Activated CD4-positive, alpha-beta T cell treated with anti-CD3 and anti-CD28 coated beads for 36 hours (primary cell): ENCODE measurements at regions of chr1 and their contacts with region 1.

Region 1: DNA sequence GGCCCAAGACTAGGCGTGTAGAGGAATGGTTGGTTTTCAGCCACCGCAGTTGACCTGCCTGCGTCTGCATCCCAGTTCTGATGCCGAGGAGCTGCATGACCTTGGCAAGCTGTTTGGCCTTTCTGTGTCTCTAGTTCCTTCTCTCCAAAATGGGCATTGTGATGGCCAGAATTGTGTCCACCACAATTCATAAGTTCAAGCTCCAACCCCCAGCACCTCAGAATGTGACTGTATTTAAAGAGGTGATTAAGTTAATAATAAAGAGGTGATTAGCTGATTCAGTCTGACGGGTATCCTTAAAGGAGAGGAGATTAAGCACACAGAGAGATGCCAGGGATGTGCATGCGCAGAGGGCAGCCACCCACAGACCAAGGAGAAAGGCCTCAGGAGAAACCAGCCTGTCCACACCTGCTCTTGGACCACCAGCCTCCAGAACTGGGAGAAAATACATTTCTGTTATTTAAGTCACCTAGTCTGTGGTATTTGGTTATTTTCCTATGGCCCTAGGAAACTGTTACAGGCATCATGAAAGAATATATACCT is 28.5 kb downstream of the MAB21L3 start:
- DNase-seq: no peak
- ATAC-seq: no peak
- H3K4me3 Mint-ChIP-seq: no peak overlapping the region
- H3K27ac Mint-ChIP-seq: no peak overlapping the region
- H3K4me1 Mint-ChIP-seq: peaks cover 12% of the 10 kb centered on the region
- H3K27me3 Mint-ChIP-seq: no peaks in the 10 kb centered on the region

Region 2: GRCh38 chr1:115991909-115992308 is 147.8 kb before region 1 on chr1:
- CTCF ChIA-PET with region 1: no interaction called
- POLR2A ChIA-PET with region 1: no interaction called
- intact Hi-C with region 1: no loop called
- DNase-seq: no peak
- ATAC-seq: no peak
- H3K4me3 Mint-ChIP-seq: no peak overlapping the region
- H3K27ac Mint-ChIP-seq: no peak overlapping the region
- H3K4me1 Mint-ChIP-seq: peaks cover 3% of the 10 kb centered on the region
- H3K27me3 Mint-ChIP-seq: peaks cover 3% of the 10 kb centered on the region

Region 3: DNA sequence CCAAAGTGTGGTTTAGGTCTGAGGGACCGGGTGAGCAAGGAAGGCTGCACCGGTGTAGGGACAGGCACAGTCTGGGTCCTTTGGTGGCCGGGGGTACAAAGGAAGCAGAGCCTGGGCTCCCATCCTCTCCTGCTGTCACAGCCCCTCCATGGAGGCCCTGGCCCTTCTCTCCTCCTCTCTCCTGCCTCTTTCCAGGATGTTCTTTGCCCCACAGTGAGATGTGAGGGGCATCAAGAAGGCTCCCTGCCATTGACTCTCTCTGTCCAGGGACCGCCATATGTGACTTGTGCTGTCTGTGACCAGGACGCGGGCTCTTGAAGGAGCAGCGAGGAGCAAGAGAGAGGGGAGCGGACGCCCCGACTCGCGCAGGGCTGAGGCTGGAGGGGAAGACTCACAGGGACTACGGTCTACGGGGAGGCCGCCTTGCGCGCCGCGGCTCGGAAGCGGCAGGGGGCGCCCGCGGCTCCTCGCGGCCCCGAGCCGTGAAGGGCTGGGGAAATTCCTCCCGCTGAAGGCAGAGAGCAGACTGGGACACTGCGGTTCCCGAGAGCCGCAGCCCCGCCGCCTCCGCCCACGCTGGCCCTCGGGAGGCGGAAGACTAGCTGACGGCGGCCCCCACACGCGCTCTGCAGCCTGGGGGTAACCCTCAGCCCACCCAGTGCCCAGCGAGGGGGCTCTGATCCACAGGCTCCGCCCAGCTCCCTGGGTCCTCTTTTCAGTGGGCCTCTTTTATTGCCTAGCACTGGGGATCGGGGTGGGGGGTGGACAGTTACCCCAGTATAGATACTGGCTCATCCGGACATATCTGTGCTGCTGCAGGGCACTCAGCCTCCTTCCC is 12.3 kb after region 1 on chr1:
- CTCF ChIA-PET with region 1: interaction called, 55 read pairs
- POLR2A ChIA-PET with region 1: interaction called, 3 read pairs
- intact Hi-C with region 1: no loop called
- DNase-seq: peak; percentile 87
- ATAC-seq: peak; percentile 98
- H3K4me3 Mint-ChIP-seq: peak overlapping the region; percentile 49
- H3K27ac Mint-ChIP-seq: peak overlapping the region; percentile 70
- H3K4me1 Mint-ChIP-seq: peaks cover 18% of the 10 kb centered on the region
- H3K27me3 Mint-ChIP-seq: peaks cover 4% of the 10 kb centered on the region

Region 4: GRCh38 chr1:116411784-116412479 is 272.3 kb after region 1 on chr1:
- CTCF ChIA-PET with region 1: interaction called, 11 read pairs
- POLR2A ChIA-PET with region 1: no interaction called
- intact Hi-C with region 1: no loop called
- DNase-seq: no peak
- ATAC-seq: peak; percentile 19
- H3K4me3 Mint-ChIP-seq: no peak overlapping the region
- H3K27ac Mint-ChIP-seq: no peak overlapping the region
- H3K4me1 Mint-ChIP-seq: peaks cover 32% of the 10 kb centered on the region
- H3K27me3 Mint-ChIP-seq: no peaks in the 10 kb centered on the region

Region 5: GRCh38 chr1:116474921-116475849 is 335.5 kb after region 1 on chr1:
- CTCF ChIA-PET with region 1: interaction called, 11 read pairs
- POLR2A ChIA-PET with region 1: no interaction called
- intact Hi-C with region 1: no loop called
- DNase-seq: no peak
- ATAC-seq: no peak
- H3K4me3 Mint-ChIP-seq: no peak overlapping the region
- H3K27ac Mint-ChIP-seq: no peak overlapping the region
- H3K4me1 Mint-ChIP-seq: no peaks in the 10 kb centered on the region
- H3K27me3 Mint-ChIP-seq: peaks cover 2% of the 10 kb centered on the region

Region 6: DNA sequence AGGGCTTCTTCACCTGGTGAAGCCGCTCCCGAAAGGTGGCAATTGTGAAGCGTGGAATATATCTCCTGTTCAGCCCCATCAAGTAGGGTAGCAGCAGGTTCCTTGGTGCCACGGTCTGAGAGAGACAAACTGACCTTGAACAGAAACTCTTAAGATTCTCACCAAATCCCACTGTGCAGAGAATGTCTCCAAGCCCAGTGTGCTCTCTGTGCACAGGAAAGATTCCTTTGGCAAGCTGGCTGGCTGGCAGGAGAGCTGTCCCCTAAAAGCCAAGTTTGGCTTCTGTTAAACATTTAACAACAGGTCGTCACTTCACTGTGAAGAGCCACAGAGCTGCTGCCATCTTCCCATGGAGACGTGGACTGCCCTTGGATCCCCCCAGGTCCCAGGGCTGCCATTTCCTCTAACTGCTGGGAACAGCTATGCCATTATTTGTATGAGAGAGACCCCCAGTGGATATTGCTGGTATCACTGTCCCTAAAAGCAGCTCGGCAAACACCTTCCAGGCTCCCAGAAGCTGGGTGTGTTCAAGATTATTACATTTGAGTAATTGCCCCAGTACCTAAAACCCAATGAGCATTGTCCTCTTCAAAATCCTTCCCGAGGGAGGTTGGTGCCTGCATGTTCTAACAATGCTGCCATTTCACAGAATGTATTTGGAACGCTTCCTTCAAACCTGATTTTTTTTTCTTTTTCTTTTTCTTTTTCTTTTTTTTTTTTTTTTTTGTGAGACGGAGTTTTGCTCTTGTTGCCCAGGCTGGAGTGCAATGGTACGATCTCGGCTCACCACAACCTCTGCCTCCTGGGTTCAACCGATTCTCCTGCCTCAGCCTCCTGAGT is 359.3 kb after region 1 on chr1:
- CTCF ChIA-PET with region 1: interaction called, 73 read pairs
- POLR2A ChIA-PET with region 1: no interaction called
- intact Hi-C with region 1: loop called (anchors 1 kb)
- DNase-seq: peak; percentile 61
- ATAC-seq: peak; percentile 73
- H3K4me3 Mint-ChIP-seq: no peak overlapping the region
- H3K27ac Mint-ChIP-seq: no peak overlapping the region
- H3K4me1 Mint-ChIP-seq: peaks cover 24% of the 10 kb centered on the region
- H3K27me3 Mint-ChIP-seq: no peaks in the 10 kb centered on the region

Region 7: DNA sequence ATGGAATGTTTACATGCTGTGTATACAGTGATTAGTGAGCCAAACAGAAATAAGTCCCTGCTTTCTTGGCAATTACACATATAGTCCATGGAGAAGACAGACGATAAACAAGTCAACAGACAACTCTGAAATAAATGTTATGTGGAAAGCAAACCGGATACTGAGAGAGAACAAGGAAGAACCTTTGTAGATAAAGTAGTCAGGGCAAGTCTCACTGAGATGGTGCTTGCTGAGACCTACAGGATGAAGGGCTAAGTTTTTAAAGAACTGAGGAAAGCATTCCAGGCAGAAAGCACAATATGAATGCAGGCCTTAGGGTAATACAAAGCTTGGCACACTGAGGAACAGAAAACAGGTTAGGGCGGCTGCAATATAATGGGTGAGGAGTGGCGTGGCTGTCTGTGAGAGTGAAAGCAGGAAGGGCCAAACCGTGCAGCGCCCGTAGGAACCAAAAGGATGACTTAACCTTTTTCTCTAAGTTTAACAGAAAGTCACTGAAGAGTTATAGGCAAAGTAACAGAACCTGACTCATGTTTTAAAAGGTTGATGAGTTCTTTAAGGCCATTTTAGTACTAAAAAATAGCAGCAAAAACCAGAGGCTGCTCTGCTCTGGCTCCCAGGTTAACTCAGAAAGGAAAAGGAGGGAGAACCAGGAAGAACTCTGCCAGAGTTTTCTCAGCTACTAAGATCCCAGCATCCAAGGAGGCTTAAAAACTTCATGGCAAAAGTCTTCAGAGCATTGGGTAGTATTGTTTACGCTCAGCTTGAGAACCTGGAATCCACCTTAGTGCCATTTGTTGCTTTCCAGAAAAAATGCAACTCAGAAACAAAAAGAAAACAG is 911.8 kb after region 1 on chr1:
- CTCF ChIA-PET with region 1: no interaction called
- POLR2A ChIA-PET with region 1: no interaction called
- intact Hi-C with region 1: loop called in 1 of 2 experiments (anchors 2 kb)
- DNase-seq: peak; percentile 57
- ATAC-seq: peak; percentile 57
- H3K4me3 Mint-ChIP-seq: peak overlapping the region; percentile 14
- H3K27ac Mint-ChIP-seq: peak overlapping the region; percentile 65
- H3K4me1 Mint-ChIP-seq: peaks cover 54% of the 10 kb centered on the region
- H3K27me3 Mint-ChIP-seq: no peaks in the 10 kb centered on the region